ENCODE measurements at regions of chr3 and their contacts with region 1.

Region 1: GRCh38 chr3:58217209-58217811 is 6.5 kb upstream of the DNASE1L3 start:
- DNase-seq: peak; percentile 73
- ATAC-seq: peak; percentile 81

Region 2: DNA sequence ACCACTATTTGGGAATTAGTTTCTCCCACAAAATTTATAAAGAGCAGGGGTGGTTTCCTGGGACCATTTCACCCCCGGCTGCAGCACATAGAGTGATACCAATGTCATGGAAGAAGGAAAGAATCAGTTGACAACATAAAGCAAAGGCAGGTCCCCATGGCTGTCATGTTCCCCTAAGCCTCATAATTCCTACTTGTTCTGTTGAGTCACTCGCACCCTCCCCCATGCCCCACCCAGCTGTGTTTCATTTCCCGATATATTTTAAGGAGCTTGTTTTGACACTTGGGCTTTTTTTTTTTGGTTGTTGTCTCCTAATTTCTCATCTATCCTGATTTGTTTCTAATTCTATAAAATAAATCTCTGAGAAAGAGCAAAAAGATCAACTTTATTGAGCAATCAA is 1773.9 kb before region 1 on chr3:
- intact Hi-C with region 1: loop called (anchors 10 kb)
- DNase-seq: no peak
- ATAC-seq: no peak

Measured in sciatic nerve (tissue), 2 donors.